ENCODE measurements at regions of chr12 and their contacts with region 1.

Region 1: GRCh38 chr12:26845057-26845666 is 12.2 kb upstream of the ITPR2 start:
- DNase-seq: peak; percentile 70
- H3K4me3 ChIP-seq: no peak overlapping the region
- H3K27ac ChIP-seq: no peak overlapping the region
- H3K4me1 ChIP-seq: no peaks in the 10 kb centered on the region
- H3K27me3 ChIP-seq: no peaks in the 10 kb centered on the region
- CTCF ChIP-seq: peak; percentile 69

Region 2: GRCh38 chr12:26786865-26787514 is 58.2 kb before region 1 on chr12:
- intact Hi-C with region 1: loop called (anchors 10 kb)
- DNase-seq: no peak
- H3K4me3 ChIP-seq: no peak overlapping the region
- H3K27ac ChIP-seq: no peak overlapping the region
- H3K4me1 ChIP-seq: no peaks in the 10 kb centered on the region
- H3K27me3 ChIP-seq: no peaks in the 10 kb centered on the region
- CTCF ChIP-seq: no peak

Measured in colonic mucosa (tissue), 4 donors.